ENCODE measurements at regions of chr16 and their contacts with region 1.

Region 1: DNA sequence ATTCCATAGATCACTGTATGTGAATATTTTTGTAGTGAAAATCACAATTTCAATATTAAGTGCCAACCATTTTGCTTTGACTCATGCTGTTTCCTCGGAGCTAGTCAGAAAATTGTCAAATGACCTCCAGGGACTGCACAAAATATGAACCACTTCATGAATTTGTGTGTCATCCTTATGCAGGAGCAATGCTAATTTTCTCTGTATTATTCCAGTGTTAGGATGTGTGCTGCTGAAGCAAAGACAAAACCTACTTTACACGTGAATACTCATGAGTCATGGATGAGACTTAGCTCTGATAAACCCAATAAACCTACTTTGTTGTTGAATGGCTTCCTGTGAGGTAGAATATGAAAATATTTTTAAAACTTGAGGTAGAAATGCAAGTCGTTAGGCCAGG is 65.2 kb downstream of the SHCBP1 start:
- DNase-seq: no peak
- H3K4me3 Mint-ChIP-seq: no peak overlapping the region
- H3K27ac Mint-ChIP-seq: no peak overlapping the region
- H3K4me1 Mint-ChIP-seq: no peaks in the 10 kb centered on the region
- H3K27me3 Mint-ChIP-seq: peaks cover 8% of the 10 kb centered on the region

Region 2: DNA sequence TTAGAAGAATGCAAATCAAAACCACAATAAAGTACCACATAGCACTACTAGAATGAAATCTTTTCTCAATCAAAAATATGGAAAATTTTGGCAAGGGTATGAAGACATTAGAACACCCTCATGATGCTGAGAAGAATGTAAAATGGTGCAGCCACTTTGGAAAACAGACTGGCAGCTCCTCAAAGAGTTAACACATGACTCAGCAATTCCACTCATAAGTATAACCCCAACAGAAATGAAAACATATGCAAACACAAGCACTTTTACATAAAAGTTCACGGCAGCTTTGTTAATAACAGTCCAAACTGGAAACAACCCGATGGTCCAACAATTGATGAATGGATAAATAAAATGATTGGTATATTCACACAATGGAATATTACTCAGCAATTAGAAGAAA is 59.2 kb before region 1 on chr16:
- CTCF ChIA-PET with region 1: no interaction called
- POLR2A ChIA-PET with region 1: no interaction called
- intact Hi-C with region 1: no loop called
- DNase-seq: no peak
- H3K4me3 Mint-ChIP-seq: no peak overlapping the region
- H3K27ac Mint-ChIP-seq: no peak overlapping the region
- H3K4me1 Mint-ChIP-seq: no peaks in the 10 kb centered on the region
- H3K27me3 Mint-ChIP-seq: no peaks in the 10 kb centered on the region

Region 3: DNA sequence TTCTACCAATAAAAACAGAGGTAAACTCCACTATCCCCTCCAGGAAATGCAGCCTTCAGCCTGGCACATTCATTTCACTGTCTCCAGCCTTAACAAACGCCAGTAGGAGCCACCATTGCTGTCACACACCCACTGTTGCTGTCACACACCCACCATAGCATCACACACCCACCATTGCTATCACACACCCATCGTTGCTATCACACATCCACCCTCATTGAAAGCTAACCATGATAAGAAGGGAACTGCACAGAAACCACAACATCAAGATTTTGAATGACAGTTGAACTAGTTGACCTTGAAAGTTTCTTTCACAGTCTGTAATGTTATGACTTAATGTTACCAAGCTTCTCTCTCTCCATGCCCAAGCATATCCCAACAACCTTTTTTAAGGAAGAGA is 27.1 kb after region 1 on chr16:
- CTCF ChIA-PET with region 1: no interaction called
- POLR2A ChIA-PET with region 1: no interaction called
- intact Hi-C with region 1: no loop called
- DNase-seq: no peak
- H3K4me3 Mint-ChIP-seq: no peak overlapping the region
- H3K27ac Mint-ChIP-seq: no peak overlapping the region
- H3K4me1 Mint-ChIP-seq: peaks cover 3% of the 10 kb centered on the region
- H3K27me3 Mint-ChIP-seq: no peaks in the 10 kb centered on the region

Region 4: GRCh38 chr16:46607529-46607928 is 51.6 kb after region 1 on chr16:
- CTCF ChIA-PET with region 1: interaction called, 49 read pairs
- POLR2A ChIA-PET with region 1: no interaction called
- intact Hi-C with region 1: loop called (anchors 1 kb)
- DNase-seq: no peak
- H3K4me3 Mint-ChIP-seq: no peak overlapping the region
- H3K27ac Mint-ChIP-seq: no peak overlapping the region
- H3K4me1 Mint-ChIP-seq: no peaks in the 10 kb centered on the region
- H3K27me3 Mint-ChIP-seq: no peaks in the 10 kb centered on the region

Region 5: DNA sequence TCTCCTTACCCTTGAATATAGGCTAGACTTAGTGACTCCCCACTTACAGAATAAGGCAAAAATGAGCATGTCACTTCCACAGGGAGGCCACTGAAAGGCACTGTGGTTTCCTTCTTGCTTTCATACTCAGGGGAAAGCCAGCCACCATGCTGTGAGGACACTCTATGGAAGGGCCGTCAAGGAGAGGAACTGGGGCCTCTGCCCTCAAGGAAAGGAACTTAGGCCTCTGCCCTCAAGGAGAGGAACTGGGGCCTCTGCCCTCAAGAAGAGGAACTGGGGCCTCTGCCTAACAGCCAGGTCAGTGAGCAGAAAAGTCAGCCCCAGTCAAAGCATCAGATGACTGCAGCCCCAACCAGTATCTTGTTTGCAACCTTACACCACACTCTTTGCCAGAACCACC is 103.0 kb after region 1 on chr16:
- CTCF ChIA-PET with region 1: no interaction called
- POLR2A ChIA-PET with region 1: no interaction called
- intact Hi-C with region 1: loop called (anchors 10 kb)
- DNase-seq: peak; percentile 57
- H3K4me3 Mint-ChIP-seq: no peak overlapping the region
- H3K27ac Mint-ChIP-seq: peak overlapping the region; percentile 64
- H3K4me1 Mint-ChIP-seq: peaks cover 12% of the 10 kb centered on the region
- H3K27me3 Mint-ChIP-seq: no peaks in the 10 kb centered on the region

Region 6: DNA sequence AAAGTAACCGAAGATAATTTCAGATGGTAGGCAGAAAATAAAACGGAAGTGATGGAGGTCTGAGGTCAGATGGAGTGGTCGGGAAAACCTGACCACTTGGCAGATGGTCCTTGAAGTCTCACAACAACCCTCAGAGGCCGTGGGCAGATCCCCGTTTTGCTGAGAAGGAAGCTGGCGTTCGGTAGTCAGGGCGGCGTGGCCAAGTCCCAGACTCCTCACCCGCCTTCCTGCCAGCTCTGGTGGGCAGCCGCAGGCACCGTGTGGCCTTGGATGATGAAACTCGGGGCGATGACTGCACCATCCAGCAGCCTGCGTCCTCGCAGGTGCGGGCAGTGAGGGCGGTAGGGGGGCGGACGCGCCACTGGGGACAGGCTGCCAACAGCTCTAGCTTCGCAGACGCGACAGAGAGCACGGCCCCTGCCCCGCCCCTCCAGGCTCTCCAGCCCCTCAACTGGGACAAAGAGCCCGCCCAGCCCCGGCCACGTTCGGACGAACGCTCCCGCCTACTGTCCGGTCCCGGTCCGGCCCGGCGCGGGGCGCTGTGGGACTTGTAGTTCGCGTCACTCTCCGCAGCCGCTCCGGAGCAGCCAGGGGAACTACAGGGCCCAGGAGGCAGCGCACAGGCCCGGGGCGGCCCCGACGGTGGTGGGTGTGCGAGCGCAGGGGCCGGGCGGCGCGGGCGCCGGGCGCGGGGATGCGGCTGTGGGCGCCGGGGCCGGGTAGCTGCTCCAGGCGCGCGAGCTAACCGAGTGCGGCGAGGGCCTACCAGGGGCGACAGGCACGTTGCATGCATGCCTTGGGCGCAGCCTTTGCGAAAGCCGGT is 327.9 kb after region 1 on chr16 and contains the start of gene GPT2:
- CTCF ChIA-PET with region 1: no interaction called
- POLR2A ChIA-PET with region 1: no interaction called
- intact Hi-C with region 1: no loop called
- DNase-seq: peak; percentile 88
- H3K4me3 Mint-ChIP-seq: peak within 1 kb of the TSS; percentile 73
- H3K27ac Mint-ChIP-seq: peak within 1 kb of the TSS; percentile 72
- H3K4me1 Mint-ChIP-seq: peaks cover 18% of the 10 kb centered on the region
- H3K27me3 Mint-ChIP-seq: peaks cover 5% of the 10 kb centered on the region
- total RNA-seq, gene GPT2: 20.2 to 23.1 TPM

Measured in activated CD4-positive, alpha-beta memory T cell treated with anti-CD3 and anti-CD28 coated beads for 36 hours (primary cell).